ENCODE measurements at regions of chr6 and their contacts with region 1.

Region 1: DNA sequence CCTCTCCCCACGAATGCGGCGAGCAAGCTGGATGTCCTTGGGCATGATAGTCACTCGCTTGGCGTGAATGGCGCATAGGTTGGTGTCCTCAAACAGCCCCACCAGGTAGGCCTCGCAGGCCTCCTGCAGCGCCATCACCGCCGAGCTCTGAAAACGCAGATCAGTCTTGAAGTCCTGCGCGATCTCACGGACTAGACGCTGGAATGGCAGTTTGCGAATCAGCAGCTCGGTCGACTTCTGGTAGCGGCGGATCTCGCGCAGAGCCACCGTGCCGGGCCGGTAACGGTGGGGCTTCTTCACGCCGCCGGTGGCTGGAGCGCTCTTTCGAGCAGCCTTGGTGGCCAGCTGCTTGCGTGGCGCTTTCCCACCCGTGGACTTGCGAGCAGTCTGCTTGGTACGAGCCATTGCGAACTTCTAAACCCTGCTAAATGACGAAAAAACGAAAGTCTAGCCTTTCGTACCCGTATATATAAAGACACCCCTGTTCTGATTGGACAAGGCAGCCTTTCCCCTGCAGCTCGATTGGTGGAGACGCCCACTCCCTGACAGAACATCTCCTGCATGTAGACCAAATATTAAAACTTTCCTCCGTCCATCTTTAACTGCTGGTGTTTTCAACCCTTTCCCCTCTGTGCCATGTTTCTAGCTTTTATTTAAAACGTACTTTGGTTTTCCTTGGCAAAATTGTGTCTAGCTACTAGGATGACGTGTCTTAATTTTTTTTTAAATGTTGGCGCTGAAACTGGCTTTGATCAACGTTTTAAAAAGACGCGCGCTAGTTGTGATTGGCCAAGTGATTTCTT is 109.8 kb downstream of the HFE start:
- DNase-seq: no peak

Region 2: DNA sequence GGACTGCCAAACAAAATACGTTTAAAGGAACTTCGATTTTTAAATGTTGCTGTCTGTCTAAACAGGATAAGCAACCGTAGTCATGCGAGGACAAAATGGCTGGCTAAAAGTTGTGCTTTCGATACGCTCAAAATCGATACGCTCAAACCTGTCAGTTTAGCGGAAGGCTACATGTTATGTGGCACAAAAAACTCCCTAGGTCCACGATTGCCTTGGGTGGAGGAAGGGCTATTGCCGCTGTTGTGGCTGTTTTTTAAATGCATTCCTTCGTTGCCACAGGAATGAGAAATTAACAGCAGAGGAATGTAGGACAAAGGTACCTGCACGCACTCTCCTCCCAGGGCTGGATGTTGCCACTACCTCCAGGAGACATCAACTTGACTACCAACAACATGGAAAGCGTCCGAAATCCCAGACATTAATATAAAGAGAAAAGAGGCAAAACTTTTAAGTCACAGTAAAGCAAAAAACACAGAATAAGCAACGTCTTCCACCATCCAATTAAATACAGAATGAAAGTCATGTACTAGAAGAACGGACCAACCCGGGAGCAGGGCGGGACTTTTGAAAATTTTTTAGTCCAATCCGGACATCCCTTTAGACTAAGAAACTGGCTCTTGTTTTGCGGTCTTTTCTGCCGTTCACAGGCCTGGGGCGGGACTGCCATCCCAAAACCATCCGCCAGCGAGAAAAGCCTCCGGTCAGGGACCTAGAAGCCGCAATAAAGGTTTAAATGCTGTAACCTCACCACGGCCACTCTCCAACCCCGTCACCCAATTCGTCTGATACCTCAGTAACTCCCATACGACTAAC is 142.0 kb before region 1 on chr6:
- CTCF ChIA-PET with region 1: no interaction called
- POLR2A ChIA-PET with region 1: interaction called, 24 read pairs
- DNase-seq: peak; percentile 62

Region 3: GRCh38 chr6:26172496-26172958 is 24.5 kb before region 1 on chr6:
- CTCF ChIA-PET with region 1: no interaction called
- POLR2A ChIA-PET with region 1: interaction called, 16 read pairs
- DNase-seq: no peak

Region 4: DNA sequence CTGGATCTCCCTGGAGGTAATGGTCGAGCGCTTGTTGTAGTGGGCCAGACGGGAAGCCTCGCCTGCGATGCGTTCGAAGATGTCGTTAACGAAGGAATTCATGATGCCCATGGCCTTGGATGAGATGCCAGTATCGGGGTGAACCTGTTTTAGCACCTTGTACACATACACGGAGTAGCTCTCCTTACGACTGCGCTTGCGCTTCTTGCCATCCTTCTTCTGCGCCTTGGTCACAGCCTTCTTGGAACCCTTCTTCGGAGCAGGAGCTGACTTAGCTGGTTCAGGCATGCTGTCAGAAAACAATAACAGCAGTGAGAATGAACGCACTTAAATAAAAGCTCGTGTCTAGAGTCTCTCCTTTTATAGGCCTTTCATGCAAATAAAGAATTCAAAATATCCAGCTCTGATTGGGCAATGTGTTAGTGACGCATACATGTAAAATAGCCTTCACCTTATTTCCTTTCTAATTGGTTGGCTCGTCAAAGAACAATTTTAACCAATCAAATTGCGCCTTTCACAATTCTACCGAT is 19.4 kb after region 1 on chr6:
- CTCF ChIA-PET with region 1: interaction called, 3 read pairs
- POLR2A ChIA-PET with region 1: interaction called, 50 read pairs
- DNase-seq: no peak

Region 5: GRCh38 chr6:26234421-26235296 is 37.6 kb after region 1 on chr6:
- CTCF ChIA-PET with region 1: interaction called, 3 read pairs
- POLR2A ChIA-PET with region 1: interaction called, 17 read pairs
- DNase-seq: peak; percentile 72

Region 6: GRCh38 chr6:26257272-26257671 is 60.2 kb after region 1 on chr6:
- CTCF ChIA-PET with region 1: no interaction called
- POLR2A ChIA-PET with region 1: no interaction called
- DNase-seq: no peak

Region 7: DNA sequence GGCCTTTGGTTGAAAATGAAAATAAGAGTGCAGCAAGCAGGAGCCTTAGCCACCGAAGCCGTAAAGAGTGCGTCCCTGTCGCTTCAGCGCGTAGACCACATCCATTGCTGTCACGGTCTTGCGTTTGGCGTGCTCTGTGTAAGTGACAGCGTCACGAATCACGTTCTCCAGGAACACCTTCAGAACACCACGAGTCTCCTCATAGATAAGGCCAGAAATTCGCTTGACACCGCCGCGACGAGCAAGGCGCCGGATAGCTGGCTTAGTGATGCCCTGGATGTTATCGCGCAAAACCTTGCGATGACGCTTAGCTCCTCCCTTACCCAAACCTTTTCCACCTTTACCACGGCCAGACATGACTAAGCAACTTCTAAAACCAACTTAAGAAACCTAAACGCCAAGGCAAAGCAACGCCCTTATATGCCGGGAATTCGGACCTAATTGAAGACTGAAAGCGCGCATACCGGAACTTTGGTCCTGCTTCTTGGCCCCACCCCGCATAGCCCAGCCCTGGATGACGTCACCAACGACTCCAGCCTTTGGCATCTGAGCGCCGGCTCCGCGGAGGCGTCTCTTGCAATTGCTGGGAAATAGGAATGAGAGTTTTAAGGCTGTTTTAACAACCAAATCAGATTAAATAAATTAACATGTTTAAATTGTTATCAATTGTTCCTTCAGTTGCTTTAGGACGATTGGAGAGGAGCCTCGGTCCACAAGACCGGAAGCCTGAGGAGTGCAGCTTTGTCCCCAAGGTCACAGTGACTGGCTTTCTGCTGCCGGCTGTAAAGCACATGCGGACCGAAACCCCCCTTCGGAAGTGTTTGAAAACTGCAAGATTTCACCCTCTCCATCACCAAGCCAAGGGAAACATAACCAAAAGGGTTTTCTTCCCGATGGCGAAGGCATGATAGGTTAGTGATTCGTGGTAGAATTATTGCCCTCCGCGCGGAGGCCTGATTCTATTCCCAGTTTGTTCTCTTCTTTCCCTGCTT is 88.4 kb after region 1 on chr6:
- CTCF ChIA-PET with region 1: no interaction called
- POLR2A ChIA-PET with region 1: interaction called, 31 read pairs
- DNase-seq: peak; percentile 83

Region 8: DNA sequence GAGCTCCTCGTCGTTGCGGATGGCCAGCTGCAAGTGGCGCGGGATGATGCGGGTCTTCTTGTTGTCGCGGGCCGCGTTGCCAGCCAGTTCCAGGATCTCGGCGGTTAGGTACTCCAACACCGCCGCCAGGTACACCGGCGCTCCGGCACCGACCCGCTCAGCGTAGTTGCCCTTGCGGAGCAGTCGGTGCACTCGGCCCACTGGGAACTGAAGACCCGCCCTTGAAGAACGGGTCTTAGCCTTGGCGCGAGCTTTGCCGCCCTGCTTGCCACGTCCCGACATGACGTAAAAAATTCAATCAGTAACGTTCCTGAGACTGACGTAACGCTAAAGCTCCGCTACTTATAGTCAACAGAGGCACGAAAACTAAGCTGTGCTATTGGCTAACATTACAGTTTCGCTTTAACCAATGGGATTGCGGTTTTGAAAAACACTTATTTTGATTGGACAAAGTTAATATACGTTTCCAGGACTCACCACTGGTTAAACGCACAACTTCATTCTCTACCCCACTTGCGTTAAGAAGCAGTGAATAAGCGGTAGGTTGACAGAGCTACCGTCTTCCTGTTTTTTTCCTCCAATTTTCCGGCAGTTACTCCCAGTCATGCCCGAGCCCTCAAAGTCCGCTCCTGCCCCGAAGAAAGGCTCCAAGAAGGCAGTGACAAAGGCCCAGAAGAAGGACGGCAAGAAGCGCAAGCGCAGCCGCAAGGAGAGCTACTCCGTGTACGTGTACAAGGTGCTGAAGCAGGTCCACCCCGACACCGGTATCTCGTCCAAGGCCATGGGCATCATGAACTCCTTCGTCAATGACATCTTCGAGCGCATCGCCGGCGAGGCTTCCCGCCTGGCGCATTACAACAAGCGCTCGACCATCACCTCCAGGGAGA is 1641.3 kb after region 1 on chr6:
- CTCF ChIA-PET with region 1: no interaction called
- POLR2A ChIA-PET with region 1: interaction called, 16 read pairs
- DNase-seq: peak; percentile 79